Dorsolateral prefrontal cortex (tissue), 120 donors: ENCODE measurements at regions of chr3 and their contacts with region 1.

Region 1: DNA sequence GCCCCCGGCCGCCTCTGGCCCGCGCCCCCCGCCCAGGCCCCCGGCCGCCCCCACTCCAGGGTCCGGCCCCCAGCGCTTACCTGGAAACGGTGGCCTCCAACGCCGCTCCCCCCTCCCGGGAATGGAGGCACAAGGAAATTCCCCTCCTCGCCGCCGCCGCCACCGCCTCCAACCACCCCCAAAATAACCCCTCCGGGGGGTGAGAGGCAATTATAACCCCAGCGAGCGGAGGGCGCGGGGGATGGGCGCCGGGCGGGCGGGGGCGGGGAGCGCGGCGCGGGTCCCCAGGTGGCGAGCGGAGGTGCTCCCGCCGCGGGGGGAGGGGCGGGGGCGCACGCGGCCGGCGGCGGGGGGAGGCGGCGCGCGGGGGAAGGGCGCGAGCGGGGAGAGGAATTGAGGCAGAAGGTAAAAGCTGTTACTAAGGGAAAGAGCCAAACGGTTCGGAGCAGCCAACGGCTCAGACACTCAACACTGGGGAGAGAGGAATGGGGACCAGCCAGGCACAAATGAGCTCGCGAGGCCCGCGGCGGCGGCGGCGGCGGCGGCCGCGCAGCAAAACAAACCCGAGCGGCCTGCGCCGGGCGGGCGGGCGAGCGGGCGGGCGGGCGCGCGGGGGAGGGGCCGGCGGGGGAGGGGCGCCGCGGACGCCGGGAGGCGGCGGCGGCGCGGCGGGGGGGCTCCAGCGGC is at the start of gene TBL1XR1:
- DNase-seq: peak; percentile 84 to 94 (median 92)
- H3K4me3 ChIP-seq: peak within 1 kb of the TSS; percentile 60 to 87 (median 77)
- H3K27ac ChIP-seq: peak within 1 kb of the TSS; percentile 71 to 99 (median 95)
- H3K27me3 ChIP-seq: no peaks in the 10 kb centered on the region
- CTCF ChIP-seq: peak in 1 of 56 donors; percentile 12
- total RNA-seq, gene TBL1XR1: 104 to 240 (median 165) TPM

Region 2: GRCh38 chr3:176479291-176479690 is 717.9 kb before region 1 on chr3:
- intact Hi-C with region 1: no loop called
- DNase-seq: no peak
- H3K4me3 ChIP-seq: no peak overlapping the region
- H3K27ac ChIP-seq: no peak overlapping the region
- H3K27me3 ChIP-seq: peaks cover 0 to 4% (median 0%) of the 10 kb centered on the region in 45 donors
- CTCF ChIP-seq: no peak

Region 3: GRCh38 chr3:177050501-177051237 is 146.5 kb before region 1 on chr3:
- intact Hi-C with region 1: loop called (anchors 1 to 2 kb)
- DNase-seq: no peak
- H3K4me3 ChIP-seq: peak overlapping the region in 27 of 59 donors; percentile 6 to 50 (median 28)
- H3K27ac ChIP-seq: peak overlapping the region in 57 of 59 donors; percentile 8 to 91 (median 77)
- H3K27me3 ChIP-seq: no peaks in the 10 kb centered on the region
- CTCF ChIP-seq: peak; percentile 53 to 82 (median 74)

Region 4: GRCh38 chr3:177615015-177615414 is 417.8 kb after region 1 on chr3:
- intact Hi-C with region 1: loop called in 1 of 2 experiments (anchors 5 kb)
- DNase-seq: no peak
- H3K4me3 ChIP-seq: no peak overlapping the region
- H3K27ac ChIP-seq: peak overlapping the region in 1 of 59 donors; percentile 4
- H3K27me3 ChIP-seq: no peaks in the 10 kb centered on the region
- CTCF ChIP-seq: no peak

Region 5: DNA sequence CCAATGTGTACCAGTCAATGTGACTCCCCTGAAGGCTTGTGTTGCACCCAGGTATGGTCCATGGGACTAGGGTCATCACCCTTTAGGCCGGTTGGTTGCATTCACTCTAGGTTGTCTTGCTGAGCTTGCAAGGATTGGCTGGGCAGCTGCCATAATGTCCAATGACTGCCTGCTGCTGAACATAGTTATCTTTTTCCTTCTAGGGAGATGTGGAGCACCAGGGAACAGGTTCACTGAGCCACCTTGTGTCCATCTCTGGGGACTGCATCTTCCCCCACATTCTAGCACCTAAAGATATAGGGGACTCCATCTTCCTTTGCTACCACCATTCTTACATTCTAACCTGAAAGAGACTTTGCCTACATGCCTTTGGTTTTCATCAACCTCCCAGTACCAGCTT is 580.5 kb after region 1 on chr3:
- intact Hi-C with region 1: loop called in 1 of 2 experiments (anchors 10 kb)
- DNase-seq: peak in 7 of 10 donors; percentile 16 to 73 (median 44)
- H3K4me3 ChIP-seq: no peak overlapping the region
- H3K27ac ChIP-seq: no peak overlapping the region
- H3K27me3 ChIP-seq: no peaks in the 10 kb centered on the region
- CTCF ChIP-seq: peak; percentile 21 to 79 (median 63)

Region 6: GRCh38 chr3:178385280-178385952 is 1188.2 kb after region 1 on chr3:
- intact Hi-C with region 1: loop called in 1 of 2 experiments (anchors 5 kb)
- DNase-seq: peak in 3 of 10 donors; percentile 34 to 44 (median 40)
- H3K4me3 ChIP-seq: peak overlapping the region in 11 of 59 donors; percentile 1 to 24 (median 11)
- H3K27ac ChIP-seq: peak overlapping the region in 35 of 59 donors; percentile 0 to 83 (median 48)
- H3K27me3 ChIP-seq: no peaks in the 10 kb centered on the region
- CTCF ChIP-seq: peak; percentile 70 to 96 (median 85)